ENCODE measurements at regions of chr10 and their contacts with region 1.

Region 1: GRCh38 chr10:100878291-100878910 is 34.4 kb upstream of the SLF2 start:
- DNase-seq: peak; percentile 55
- H3K4me3 Mint-ChIP-seq: no peak overlapping the region
- H3K27ac Mint-ChIP-seq: no peak overlapping the region
- H3K4me1 Mint-ChIP-seq: no peaks in the 10 kb centered on the region
- H3K27me3 Mint-ChIP-seq: peaks cover 48% of the 10 kb centered on the region

Region 2: GRCh38 chr10:100858747-100859483 is 19.5 kb before region 1 on chr10:
- CTCF ChIA-PET with region 1: no interaction called
- DNase-seq: no peak
- H3K4me3 Mint-ChIP-seq: no peak overlapping the region
- H3K27ac Mint-ChIP-seq: no peak overlapping the region
- H3K4me1 Mint-ChIP-seq: no peaks in the 10 kb centered on the region
- H3K27me3 Mint-ChIP-seq: peaks cover 73% of the 10 kb centered on the region

Region 3: GRCh38 chr10:100888796-100889356 is 10.5 kb after region 1 on chr10:
- CTCF ChIA-PET with region 1: interaction called, 13 read pairs
- DNase-seq: no peak
- H3K4me3 Mint-ChIP-seq: no peak overlapping the region
- H3K27ac Mint-ChIP-seq: no peak overlapping the region
- H3K4me1 Mint-ChIP-seq: no peaks in the 10 kb centered on the region
- H3K27me3 Mint-ChIP-seq: peaks cover 54% of the 10 kb centered on the region